ENCODE measurements at regions of chr3 and their contacts with region 1.

Region 1: GRCh38 chr3:190120269-190121060 is at the start of gene P3H2:
- DNase-seq: peak; percentile 93
- ATAC-seq: peak; percentile 94
- H3K4me3 ChIP-seq: peak within 1 kb of the TSS; percentile 86
- H3K27ac ChIP-seq: peak within 1 kb of the TSS; percentile 66
- H3K4me1 ChIP-seq: peaks cover 15% of the 10 kb centered on the region
- H3K27me3 ChIP-seq: no peaks in the 10 kb centered on the region
- CTCF ChIP-seq: peak; percentile 70
- POLR2A ChIP-seq: peak; percentile 86
- RAD21 ChIP-seq: peak; percentile 75
- total RNA-seq, gene P3H2: 54.7 and 74.4 TPM in 2 replicates

Region 2: DNA sequence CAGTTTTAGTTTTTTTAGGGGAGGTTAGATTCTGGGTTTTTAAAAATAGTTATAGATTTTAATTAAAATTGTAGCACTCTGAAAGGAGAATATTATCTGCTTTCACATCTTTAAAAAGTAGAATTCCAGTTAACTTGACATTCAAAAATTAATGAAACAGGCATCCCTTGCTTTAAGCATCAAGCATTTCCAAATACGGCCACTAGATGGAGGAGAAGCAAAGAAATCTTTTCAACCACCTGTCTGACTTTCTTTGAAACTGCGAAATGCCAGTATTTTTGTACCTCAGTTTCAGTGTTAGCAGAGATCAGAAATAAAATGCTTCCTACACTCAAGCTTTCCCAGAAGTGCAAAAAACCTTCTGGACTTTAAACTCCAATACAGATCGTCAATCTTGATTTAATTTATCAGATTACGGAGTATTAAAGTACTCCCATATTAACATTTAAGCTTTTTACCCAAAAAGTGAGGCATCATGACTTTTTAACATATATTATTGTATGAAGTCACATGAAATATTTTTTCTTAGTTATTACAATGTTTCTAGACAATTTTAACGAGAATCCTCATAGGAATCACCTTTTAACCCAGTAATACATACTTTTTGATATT is 153.1 kb before region 1 on chr3:
- CTCF ChIA-PET with region 1: interaction called, 6 read pairs
- POLR2A ChIA-PET with region 1: no interaction called
- dilution Hi-C with region 1: no loop called
- in situ Hi-C with region 1: no loop called
- intact Hi-C with region 1: loop called (anchors 1 kb)
- DNase-seq: peak; percentile 65
- ATAC-seq: peak; percentile 54; the same call in 1 of the 2 replicates
- H3K4me3 ChIP-seq: no peak overlapping the region
- H3K27ac ChIP-seq: no peak overlapping the region
- H3K4me1 ChIP-seq: no peaks in the 10 kb centered on the region
- H3K27me3 ChIP-seq: no peaks in the 10 kb centered on the region
- CTCF ChIP-seq: peak; percentile 89
- POLR2A ChIP-seq: no peak
- RAD21 ChIP-seq: peak; percentile 87

Region 3: GRCh38 chr3:190053919-190054672 is 66.4 kb before region 1 on chr3:
- CTCF ChIA-PET with region 1: no interaction called
- POLR2A ChIA-PET with region 1: no interaction called
- dilution Hi-C with region 1: no loop called
- in situ Hi-C with region 1: no loop called
- intact Hi-C with region 1: loop called (anchors 1 kb)
- DNase-seq: peak; percentile 92
- ATAC-seq: peak; percentile 65
- H3K4me3 ChIP-seq: no peak overlapping the region
- H3K27ac ChIP-seq: peak overlapping the region; percentile 30; the same call in 1 of the 2 replicates
- H3K4me1 ChIP-seq: peaks cover 18% of the 10 kb centered on the region
- H3K27me3 ChIP-seq: no peaks in the 10 kb centered on the region
- CTCF ChIP-seq: peak; percentile 29; the same call in 1 of the 2 replicates
- POLR2A ChIP-seq: no peak; the same call in 1 of the 2 replicates
- RAD21 ChIP-seq: peak; percentile 29; the same call in 1 of the 2 replicates

Region 4: DNA sequence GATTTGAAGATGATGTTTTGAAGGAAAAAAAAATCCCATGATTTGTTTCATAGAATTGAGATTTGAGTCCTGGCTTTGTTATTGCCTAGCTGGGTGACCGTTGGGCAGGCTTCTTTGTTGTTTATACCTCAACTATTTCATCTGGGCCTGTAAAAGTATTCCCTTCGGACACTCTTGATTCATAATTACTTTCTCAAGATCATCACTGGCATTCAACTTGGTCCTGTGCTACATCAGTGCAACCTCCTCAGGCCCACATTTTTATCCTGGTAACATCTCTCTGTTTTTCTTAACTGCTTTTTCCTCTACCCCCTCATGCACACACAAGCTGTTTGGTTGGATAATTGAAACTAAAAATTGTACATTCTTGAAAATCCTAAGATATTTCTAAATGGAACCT is 67.7 kb after region 1 on chr3:
- CTCF ChIA-PET with region 1: interaction called, 4 read pairs
- POLR2A ChIA-PET with region 1: no interaction called
- dilution Hi-C with region 1: no loop called
- in situ Hi-C with region 1: no loop called
- intact Hi-C with region 1: loop called (anchors 5 kb)
- DNase-seq: no peak
- ATAC-seq: peak; percentile 16; the same call in 1 of the 2 replicates
- H3K4me3 ChIP-seq: no peak overlapping the region
- H3K27ac ChIP-seq: no peak overlapping the region
- H3K4me1 ChIP-seq: peaks cover 9% of the 10 kb centered on the region; the same call in 1 of the 2 replicates
- H3K27me3 ChIP-seq: no peaks in the 10 kb centered on the region
- CTCF ChIP-seq: no peak
- POLR2A ChIP-seq: no peak
- RAD21 ChIP-seq: no peak

Region 5: GRCh38 chr3:190321789-190322603 is 201.5 kb after region 1 on chr3 and contains the start of gene CLDN1:
- CTCF ChIA-PET with region 1: no interaction called
- POLR2A ChIA-PET with region 1: no interaction called
- dilution Hi-C with region 1: no loop called
- in situ Hi-C with region 1: no loop called
- intact Hi-C with region 1: loop called (anchors 1 kb)
- DNase-seq: peak; percentile 69
- ATAC-seq: peak; percentile 93
- H3K4me3 ChIP-seq: peak within 1 kb of the TSS; percentile 66
- H3K27ac ChIP-seq: peak within 1 kb of the TSS; percentile 3; the same call in 1 of the 2 replicates
- H3K4me1 ChIP-seq: peaks cover 14% of the 10 kb centered on the region
- H3K27me3 ChIP-seq: no peaks in the 10 kb centered on the region
- CTCF ChIP-seq: peak; percentile 95
- POLR2A ChIP-seq: peak; percentile 63; the same call in 1 of the 2 replicates
- RAD21 ChIP-seq: peak; percentile 81
- total RNA-seq, gene CLDN1: 4.7 and 7.2 TPM in 2 replicates

Measured in IMR-90 (cell line).